ENCODE measurements at regions of chr16 and their contacts with region 1.

Region 1: DNA sequence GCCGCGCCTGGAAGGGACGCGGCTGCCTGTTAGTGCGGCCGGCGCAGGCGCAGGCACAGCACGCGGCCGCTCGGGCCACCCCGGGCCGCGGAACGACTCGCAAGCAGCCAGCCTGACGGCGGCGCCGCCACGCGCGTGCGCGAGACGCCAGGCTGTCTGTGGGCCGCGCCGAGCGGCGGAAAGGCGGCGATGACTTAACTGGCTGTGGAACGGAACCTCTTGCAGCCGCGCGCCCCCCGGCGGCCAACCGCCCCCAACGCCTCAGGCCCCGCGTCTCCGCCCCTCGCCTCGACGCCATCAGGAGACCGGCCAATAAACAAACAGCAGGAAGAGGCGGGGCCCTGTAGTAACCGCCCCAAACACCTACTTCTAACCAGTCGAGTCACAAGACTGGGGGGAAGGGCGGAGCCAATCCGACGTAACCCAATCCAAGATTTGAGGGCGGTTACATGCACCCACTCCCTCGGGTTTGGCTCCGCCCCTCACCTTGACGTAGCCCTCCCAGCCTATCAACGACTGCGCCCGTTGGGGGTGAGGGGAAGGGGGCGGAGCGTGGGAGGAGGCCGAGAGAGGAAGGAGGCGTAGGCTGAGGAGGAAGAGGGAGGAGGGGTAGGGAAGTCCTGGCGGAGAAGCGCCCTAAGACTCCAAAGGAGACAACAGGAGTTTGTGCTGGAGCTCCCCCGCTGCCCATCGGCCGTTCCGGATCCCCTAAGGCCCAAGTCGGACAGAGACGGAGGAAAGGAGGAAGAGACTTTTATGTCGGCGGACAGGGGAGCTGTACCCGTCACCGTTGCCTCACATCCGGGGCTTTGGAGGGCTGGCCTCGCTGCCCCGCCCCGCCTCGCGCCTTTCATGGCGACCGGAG is at the start of gene FBRS:
- DNase-seq: peak; percentile 100
- H3K4me3 ChIP-seq: peak within 1 kb of the TSS; percentile 92
- H3K4me3 Mint-ChIP-seq: peak within 1 kb of the TSS; percentile 93 to 98 (median 94)
- H3K27ac ChIP-seq: peak within 1 kb of the TSS; percentile 100
- H3K27ac Mint-ChIP-seq: peak within 1 kb of the TSS; percentile 98 to 100 (median 100)
- H3K4me1 ChIP-seq: peaks cover 43% of the 10 kb centered on the region
- H3K4me1 Mint-ChIP-seq: peaks cover 37 to 49% (median 38%) of the 10 kb centered on the region in 3 donors
- H3K27me3 ChIP-seq: no peaks in the 10 kb centered on the region
- H3K27me3 Mint-ChIP-seq: no peaks in the 10 kb centered on the region
- total RNA-seq, gene FBRS: 115 to 124 TPM

Region 2: DNA sequence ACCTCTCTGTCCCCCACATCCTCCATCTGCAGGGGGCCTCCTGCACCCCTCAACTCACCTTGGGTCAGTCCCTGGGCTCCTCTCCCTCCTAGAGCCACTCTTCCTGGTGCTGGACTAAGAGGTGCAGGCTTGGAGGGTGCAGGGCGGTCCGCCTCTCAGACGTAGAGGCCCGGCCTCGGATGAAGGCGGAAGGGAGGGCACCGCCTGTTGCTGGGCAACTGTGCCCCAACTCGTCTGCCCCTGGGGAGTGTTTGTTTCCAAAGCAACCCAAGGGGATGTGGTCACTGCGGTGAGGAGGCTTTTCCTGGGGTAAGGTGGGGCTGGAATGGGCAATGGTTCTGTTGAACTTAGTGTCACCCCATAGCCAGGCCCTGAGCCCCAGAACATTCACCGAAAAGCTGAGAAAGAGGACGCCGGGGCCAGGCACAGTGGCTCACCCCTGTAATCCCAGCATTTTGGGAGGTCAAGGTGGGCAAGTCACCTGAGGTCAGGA is 912.2 kb before region 1 on chr16 and contains the start of gene C16orf54:
- CTCF ChIA-PET with region 1: no interaction called
- POLR2A ChIA-PET with region 1: interaction called, 14 read pairs
- DNase-seq: peak; percentile 89 to 99 (median 98)
- H3K4me3 ChIP-seq: peak within 1 kb of the TSS; percentile 86
- H3K4me3 Mint-ChIP-seq: peak within 1 kb of the TSS; percentile 96 to 100 (median 99)
- H3K27ac ChIP-seq: peak within 1 kb of the TSS; percentile 97
- H3K27ac Mint-ChIP-seq: peak within 1 kb of the TSS; percentile 98 to 100 (median 100)
- H3K4me1 ChIP-seq: peaks cover 65% of the 10 kb centered on the region
- H3K4me1 Mint-ChIP-seq: peaks cover 57 to 70% (median 61%) of the 10 kb centered on the region in 3 donors
- H3K27me3 ChIP-seq: no peaks in the 10 kb centered on the region
- H3K27me3 Mint-ChIP-seq: peaks cover 0 to 5% of the 10 kb centered on the region in 2 donors
- total RNA-seq, gene C16orf54: 32.3 to 33.3 TPM

Region 3: DNA sequence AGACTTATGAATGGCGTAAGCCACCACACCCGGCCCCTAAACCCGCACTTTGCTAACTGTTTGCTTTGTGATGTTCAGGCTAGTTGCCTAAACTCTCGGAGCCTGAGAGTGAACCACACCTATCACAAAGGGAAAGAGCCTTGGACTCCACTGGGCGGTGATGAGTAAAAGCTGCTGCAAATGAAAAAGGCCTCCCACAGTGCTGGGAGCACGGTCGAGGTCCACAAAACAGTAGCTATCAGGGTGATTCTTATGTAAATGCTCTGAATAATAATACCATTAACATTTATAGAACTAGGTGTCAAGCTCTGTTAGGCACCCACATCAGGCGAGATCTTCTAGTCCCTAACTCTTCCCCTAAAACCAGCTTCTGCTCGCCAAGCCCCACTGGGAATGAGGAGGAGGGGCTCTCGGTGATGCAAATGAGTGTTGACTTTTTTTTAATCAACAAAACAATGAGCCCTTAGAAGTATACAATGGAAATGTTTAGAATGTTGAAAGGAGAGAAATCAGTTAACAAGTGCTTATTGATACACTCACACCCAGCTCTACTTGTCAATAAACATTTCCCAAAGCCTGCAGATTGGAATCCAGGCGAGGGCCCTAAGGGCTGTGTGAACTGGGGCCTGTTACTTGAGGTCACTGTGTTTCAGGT is 20.0 kb after region 1 on chr16:
- CTCF ChIA-PET with region 1: no interaction called
- POLR2A ChIA-PET with region 1: no interaction called
- DNase-seq: no peak
- H3K4me3 ChIP-seq: no peak overlapping the region
- H3K4me3 Mint-ChIP-seq: no peak overlapping the region
- H3K27ac ChIP-seq: no peak overlapping the region
- H3K27ac Mint-ChIP-seq: no peak overlapping the region
- H3K4me1 ChIP-seq: no peaks in the 10 kb centered on the region
- H3K4me1 Mint-ChIP-seq: no peaks in the 10 kb centered on the region
- H3K27me3 ChIP-seq: no peaks in the 10 kb centered on the region
- H3K27me3 Mint-ChIP-seq: no peaks in the 10 kb centered on the region

Region 4: DNA sequence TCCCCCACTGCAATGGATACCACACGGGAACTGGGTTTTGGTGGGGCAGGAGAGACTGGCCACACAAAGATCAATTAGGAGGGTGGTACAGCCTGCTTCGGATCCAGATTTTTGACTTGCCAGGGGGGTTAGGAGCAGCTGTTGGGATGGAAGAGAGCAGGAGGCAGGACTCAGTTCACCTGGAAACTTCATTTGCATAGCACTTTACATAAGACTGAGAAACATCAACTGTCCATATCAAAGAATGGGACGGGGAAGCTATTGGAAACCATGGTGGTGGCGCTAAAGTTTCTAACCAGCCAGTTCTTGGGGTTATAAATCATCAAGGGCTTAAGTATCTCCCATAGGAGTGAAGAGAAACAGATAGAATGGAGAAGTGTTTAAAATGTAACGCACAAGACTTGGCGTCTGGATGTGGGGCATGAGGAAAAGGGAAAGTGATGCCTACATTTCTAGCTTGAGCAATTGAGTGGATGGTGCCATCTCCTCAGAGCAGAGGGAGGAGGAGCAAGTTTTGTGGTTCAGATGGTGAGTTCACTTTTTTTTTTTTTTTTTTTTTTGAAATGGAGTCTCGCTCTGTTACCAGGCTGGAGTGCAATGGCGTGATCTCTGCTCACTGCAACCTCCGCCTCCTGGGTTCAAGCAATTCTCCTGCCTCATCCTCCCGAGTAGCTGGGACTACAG is 34.4 kb after region 1 on chr16:
- CTCF ChIA-PET with region 1: interaction called, 37 read pairs
- POLR2A ChIA-PET with region 1: interaction called, 18 read pairs
- DNase-seq: no peak
- H3K4me3 ChIP-seq: no peak overlapping the region
- H3K4me3 Mint-ChIP-seq: no peak overlapping the region
- H3K27ac ChIP-seq: no peak overlapping the region
- H3K27ac Mint-ChIP-seq: peak overlapping the region in 2 of 8 donors; percentile 51 to 83
- H3K4me1 ChIP-seq: peaks cover 12% of the 10 kb centered on the region
- H3K4me1 Mint-ChIP-seq: peaks cover 11 to 20% (median 14%) of the 10 kb centered on the region in 3 donors
- H3K27me3 ChIP-seq: no peaks in the 10 kb centered on the region
- H3K27me3 Mint-ChIP-seq: no peaks in the 10 kb centered on the region

Region 5: GRCh38 chr16:30698139-30698815 is 40.2 kb after region 1 on chr16:
- CTCF ChIA-PET with region 1: interaction called, 37 read pairs
- POLR2A ChIA-PET with region 1: interaction called, 18 read pairs
- DNase-seq: peak; percentile 98 to 100 (median 99)
- H3K4me3 ChIP-seq: peak overlapping the region; percentile 84
- H3K4me3 Mint-ChIP-seq: peak overlapping the region; percentile 95 to 99 (median 97)
- H3K27ac ChIP-seq: peak overlapping the region; percentile 98
- H3K27ac Mint-ChIP-seq: peak overlapping the region; percentile 98 to 100 (median 100)
- H3K4me1 ChIP-seq: peaks cover 34% of the 10 kb centered on the region
- H3K4me1 Mint-ChIP-seq: peaks cover 29 to 47% (median 41%) of the 10 kb centered on the region in 3 donors
- H3K27me3 ChIP-seq: no peaks in the 10 kb centered on the region
- H3K27me3 Mint-ChIP-seq: peaks cover 0 to 3% of the 10 kb centered on the region in 2 donors

Measured in CD8-positive, alpha-beta memory T cell (primary cell).